ENCODE measurements at regions of chr11 and their contacts with region 1.

Region 1: DNA sequence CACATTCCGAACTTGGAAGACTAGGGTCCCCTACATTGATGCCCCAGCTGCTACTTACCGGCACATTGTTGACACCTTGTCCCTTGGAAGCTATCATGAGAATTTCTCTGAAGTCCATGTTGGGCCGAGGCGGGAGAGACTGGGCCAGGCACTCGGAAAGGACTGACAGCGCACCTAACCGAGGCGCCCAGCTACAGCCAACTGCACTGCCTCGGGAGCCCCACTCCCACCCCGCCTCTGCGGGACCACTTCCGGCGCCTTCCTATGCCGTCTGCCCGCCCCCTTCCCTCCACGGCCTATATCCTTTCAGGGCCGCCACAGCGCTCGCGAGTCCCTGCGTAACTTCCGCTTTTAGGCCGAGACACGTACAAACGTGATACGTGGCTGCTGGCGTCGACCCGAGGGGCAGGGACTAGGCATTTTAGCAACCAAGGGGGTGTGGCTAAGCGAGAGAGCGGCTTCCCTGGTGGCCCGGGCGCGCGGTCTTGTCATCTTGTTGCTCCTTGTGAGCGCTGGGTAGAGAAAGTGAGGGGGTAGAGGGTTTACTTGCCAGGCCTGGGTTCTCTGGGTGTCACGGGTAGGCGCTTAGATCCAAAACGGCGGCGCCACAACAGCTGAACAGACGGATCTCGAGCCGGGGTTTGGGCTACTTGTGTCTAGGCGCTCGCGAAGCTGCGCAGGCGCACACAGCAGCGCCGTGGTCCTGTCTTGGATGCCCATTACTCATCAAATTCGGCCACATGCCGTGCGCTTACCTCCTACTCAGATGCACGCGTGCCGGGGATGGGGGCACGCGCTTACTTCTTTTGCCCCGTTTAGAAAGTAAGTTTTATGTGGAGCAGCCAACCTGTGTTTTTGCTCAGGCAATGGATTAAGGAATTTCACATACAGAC is at the start of gene SPTY2D1:
- DNase-seq: peak; percentile 100
- total RNA-seq, gene SPTY2D1: 9.8 TPM

Region 2: DNA sequence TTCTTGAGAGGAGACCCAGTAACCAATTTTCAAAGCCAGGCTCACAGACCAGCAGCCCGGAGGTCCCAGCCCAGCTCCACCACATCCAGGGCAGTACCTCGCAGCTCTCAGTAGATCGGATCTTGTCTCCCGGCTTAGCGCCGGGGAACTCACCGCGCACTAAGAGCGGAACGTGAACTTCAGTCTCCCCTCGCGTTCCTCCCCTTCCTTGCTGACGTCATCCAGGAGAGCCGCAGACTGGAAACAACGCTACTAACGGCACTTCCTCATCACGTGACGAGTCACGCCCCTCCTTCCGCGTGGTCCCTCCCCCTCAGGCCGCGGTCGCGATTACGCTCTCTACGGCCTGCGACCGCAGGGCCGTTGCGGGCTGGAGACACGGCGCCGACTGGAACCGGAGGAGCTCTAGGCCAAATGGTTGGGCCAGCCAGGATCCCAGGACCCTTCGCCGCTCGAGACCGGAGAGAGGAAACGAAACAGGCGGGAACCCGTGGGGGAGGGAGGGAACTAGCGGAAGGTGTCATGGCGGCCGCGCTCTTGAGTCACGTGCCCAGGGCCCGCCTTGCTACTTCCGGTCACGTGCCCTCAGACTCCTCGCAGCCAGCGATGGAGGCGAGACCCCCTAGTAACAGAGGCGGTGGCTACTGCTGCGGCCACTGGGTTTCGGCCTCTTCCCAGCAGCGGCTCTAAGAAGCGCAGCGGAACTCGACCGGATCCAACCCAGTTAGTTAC is 312.2 kb before region 1 on chr11 and contains the starts of genes GTF2H1 and HPS5:
- intact Hi-C with region 1: loop called (anchors 1 kb)
- DNase-seq: peak; percentile 98
- total RNA-seq, gene GTF2H1: 23.6 TPM
- total RNA-seq, gene HPS5: 11.2 TPM

Region 3: DNA sequence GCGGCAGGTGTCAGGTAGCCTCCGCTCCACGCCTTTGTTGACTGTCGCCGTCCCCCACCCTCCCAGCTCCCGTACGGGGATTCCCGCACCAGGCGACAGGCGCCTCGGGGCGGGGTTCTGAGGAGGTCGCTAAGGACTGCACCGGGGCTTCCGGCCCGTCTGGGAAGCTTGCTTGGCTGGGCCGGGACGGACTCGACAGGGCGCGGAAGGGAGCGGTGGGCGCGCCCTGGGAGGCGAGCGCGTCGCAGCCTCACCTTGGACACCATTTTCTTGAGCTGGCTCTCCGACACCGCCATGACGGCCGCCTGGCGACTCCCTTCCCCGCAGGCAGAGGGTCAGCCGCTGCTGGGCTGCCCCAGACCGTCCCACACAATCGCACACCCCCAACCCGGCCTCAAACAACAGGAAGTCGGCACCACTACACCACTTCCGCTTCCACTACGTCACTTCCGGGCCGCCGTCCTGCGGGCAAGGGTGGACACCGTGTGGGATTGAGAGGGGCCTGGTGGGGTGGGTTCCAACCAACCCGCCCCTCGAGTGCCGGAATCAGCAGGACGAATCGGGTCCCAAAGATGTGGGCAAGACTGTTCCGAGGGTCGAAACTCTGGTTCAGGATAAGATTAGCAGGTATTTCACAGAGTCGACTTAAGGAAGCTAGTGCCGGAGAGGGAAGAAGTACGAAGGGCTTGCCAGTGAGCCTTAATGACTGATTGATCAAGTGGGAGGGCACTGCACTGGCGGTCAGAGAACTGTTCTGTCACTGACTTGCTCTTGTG is 107.7 kb before region 1 on chr11 and contains the start of gene TSG101:
- intact Hi-C with region 1: loop called (anchors 10 kb)
- DNase-seq: peak; percentile 97
- total RNA-seq, gene TSG101: 62.8 TPM

Region 4: DNA sequence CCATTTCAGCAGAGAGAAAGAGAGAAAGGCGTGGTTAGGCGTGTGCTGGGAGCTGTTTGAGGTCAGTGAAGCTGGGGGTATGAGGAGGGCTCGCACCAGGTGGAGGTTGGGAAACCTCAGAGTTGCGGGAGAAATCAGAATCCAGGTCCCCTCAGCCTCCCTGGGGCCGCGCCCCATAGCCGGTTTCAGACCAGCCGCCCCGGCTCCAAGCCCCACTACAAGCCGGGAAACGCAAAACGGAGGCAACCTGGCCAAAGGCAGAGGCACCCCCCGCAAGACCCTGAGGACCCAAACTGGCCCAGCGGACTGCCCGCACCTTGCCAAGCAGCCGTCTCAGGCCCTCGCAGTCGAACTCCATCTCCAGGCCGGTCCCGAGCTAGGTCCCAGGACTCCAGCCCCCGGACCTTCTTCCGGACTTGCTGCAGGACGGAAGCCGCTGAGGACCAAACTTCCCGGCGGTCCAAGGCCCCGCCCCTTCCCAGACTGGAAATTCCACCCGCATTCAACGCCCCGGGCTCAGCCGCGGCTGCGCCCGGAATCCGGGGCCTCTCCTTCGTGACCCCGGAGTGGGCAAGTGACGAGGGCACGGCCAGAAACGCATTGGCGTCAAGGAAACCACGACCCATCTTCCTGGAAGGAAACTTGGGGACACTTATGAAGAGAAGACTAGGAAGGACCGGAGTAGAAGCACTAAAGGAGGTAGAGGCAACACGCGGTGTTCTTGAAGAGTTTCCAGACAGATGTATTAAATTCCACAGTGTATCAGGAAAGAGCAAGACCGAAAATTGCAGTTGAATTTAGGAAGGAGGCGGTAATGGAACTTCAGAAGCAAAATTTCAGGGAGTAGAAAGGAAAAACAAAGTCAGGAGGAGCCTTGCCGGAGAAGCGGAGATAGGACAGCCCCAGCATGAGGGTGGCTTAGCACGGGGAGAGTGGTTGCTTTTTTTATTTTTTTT is 45.8 kb before region 1 on chr11 and contains the start of gene UEVLD:
- intact Hi-C with region 1: loop called (anchors 2 kb)
- DNase-seq: peak; percentile 94
- total RNA-seq, gene UEVLD: 16.6 TPM

Region 5: GRCh38 chr11:18698341-18699268 is 64.2 kb after region 1 on chr11 and contains the start of gene TMEM86A:
- intact Hi-C with region 1: loop called (anchors 1 kb)
- DNase-seq: peak; percentile 95
- total RNA-seq, gene TMEM86A: 2.6 TPM